GM10248 (cell line): ENCODE measurements at regions of chr14 and their contacts with region 1.

Region 1: GRCh38 chr14:91185721-91186120 is 58.8 kb downstream of the GPR68 start:
- DNase-seq: no peak
- CTCF ChIP-seq: no peak

Region 2: DNA sequence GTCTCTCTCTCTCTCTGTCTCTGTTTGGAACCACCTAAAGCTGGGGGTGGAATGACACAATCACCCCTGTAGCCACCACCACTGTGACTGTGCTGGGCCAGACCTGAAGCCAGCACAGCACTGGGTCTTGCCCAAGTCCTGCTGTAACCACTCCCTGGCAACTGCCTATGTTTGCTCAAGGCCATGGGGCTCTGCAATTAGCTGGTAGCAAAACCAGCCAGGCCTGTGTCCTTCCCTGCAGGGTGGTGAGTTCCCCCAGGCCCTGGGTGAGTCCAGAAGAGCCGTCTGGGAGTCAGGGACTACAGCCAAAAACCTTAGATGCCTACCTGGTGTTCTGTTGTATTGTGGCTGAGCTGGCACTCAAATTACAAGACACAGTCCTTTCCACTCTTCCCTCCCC is 21.0 kb before region 1 on chr14:
- CTCF ChIA-PET with region 1: interaction called, 10 read pairs
- POLR2A ChIA-PET with region 1: no interaction called
- DNase-seq: no peak
- CTCF ChIP-seq: no peak

Region 3: GRCh38 chr14:91195881-91196280 is 10.2 kb after region 1 on chr14:
- CTCF ChIA-PET with region 1: no interaction called
- POLR2A ChIA-PET with region 1: no interaction called
- DNase-seq: no peak
- CTCF ChIP-seq: no peak

Region 4: DNA sequence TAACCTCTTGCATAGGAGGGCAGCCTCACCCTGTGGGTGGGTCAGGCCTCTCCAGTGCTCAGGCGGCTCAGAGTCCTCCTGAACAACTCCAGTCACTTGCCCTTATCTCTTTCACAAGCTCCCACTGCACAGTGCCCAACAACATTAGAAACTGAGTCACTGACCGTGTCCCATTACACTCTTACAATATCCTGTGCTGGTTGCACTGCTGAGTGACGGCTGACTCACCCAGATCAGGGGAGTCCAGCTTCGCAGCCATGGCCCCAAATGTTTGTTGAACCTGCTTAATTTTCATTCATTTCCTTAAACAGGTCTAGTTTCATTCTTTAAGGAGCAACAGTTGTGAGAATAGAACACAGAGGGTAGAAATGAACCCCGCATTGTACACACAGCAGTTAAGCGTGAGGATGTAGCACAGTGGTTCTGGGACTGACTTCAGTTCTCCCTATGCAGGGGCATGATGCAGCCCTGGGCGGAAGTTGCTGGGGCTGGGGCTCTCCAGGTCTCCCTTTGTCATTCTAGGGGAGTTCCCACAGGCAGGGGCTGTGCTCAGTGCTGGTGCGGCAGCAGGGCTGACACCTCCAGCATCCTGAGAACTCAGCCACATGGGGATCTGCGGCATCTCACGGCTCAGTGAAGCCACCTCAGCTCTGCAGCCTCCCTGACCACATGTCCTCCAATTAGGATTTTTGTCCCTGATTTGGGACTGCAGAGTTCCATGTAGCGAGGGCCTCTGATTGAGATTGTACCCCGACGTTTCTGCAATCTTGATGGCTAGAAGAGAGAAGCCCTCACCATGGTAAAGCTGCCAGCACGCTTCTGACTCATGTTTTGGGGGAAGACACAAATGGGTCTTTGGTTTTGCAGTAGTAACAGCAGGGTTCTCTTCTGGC is 42.6 kb after region 1 on chr14:
- CTCF ChIA-PET with region 1: no interaction called
- POLR2A ChIA-PET with region 1: no interaction called
- DNase-seq: peak; percentile 87
- CTCF ChIP-seq: no peak